Dorsolateral prefrontal cortex (tissue), 120 donors: ENCODE measurements at regions of chr6 and their contacts with region 1.

Region 1: GRCh38 chr6:111011360-111012142 is 29.7 kb downstream of the RPF2 start:
- DNase-seq: no peak
- H3K4me3 ChIP-seq: no peak overlapping the region
- H3K27ac ChIP-seq: peak overlapping the region in 33 of 59 donors; percentile 4 to 80 (median 49)
- H3K27me3 ChIP-seq: no peaks in the 10 kb centered on the region
- CTCF ChIP-seq: peak; percentile 39 to 84 (median 68)

Region 2: GRCh38 chr6:110949679-110950285 is 61.8 kb before region 1 on chr6:
- intact Hi-C with region 1: no loop called
- DNase-seq: no peak
- H3K4me3 ChIP-seq: peak overlapping the region in 44 of 59 donors; percentile 6 to 56 (median 30)
- H3K27ac ChIP-seq: peak overlapping the region in 10 of 59 donors; percentile 8 to 65 (median 21)
- H3K27me3 ChIP-seq: no peaks in the 10 kb centered on the region
- CTCF ChIP-seq: peak; percentile 25 to 87 (median 68)

Region 3: DNA sequence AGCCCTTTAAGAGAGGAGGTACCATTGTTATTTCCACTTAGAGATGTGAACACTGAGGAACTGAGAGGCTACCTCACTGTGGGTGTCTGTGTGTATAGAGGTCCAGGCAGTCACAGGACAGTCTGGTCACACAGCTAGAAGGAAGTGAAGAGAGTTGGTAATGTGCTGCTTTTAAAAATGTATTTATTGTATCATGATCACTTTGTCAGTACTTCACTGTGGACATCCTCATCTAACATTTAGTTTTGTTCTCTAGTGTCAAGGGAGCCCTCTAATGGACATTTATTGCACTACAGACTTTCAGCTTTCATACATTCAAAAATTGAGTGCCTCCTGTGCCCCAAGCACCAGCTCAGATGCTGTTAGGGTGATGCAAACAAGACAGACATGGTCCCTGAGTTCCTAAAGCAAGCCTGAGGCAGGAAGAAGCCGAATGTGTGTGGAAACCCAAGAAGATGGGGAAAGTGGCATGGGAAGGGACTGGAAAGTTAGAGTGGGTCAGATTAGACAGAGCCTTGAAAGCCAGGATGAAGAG is 198.7 kb after region 1 on chr6:
- intact Hi-C with region 1: loop called (anchors 5 kb)
- DNase-seq: peak in 1 of 10 donors; percentile 6
- H3K4me3 ChIP-seq: no peak overlapping the region
- H3K27ac ChIP-seq: no peak overlapping the region
- H3K27me3 ChIP-seq: no peaks in the 10 kb centered on the region
- CTCF ChIP-seq: peak; percentile 43 to 79 (median 63)

Region 4: GRCh38 chr6:111265842-111266241 is 254.3 kb after region 1 on chr6:
- intact Hi-C with region 1: no loop called
- DNase-seq: no peak
- H3K4me3 ChIP-seq: peak overlapping the region in 1 of 59 donors; percentile 10
- H3K27ac ChIP-seq: peak overlapping the region in 11 of 59 donors; percentile 1 to 57 (median 23)
- H3K27me3 ChIP-seq: no peaks in the 10 kb centered on the region
- CTCF ChIP-seq: no peak

Region 5: GRCh38 chr6:111353912-111354462 is 342.4 kb after region 1 on chr6:
- intact Hi-C with region 1: no loop called
- DNase-seq: no peak
- H3K4me3 ChIP-seq: no peak overlapping the region
- H3K27ac ChIP-seq: no peak overlapping the region
- H3K27me3 ChIP-seq: no peaks in the 10 kb centered on the region
- CTCF ChIP-seq: no peak